IMR-90 (cell line): ENCODE measurements at regions of chr2 and their contacts with region 1.

Region 1: DNA sequence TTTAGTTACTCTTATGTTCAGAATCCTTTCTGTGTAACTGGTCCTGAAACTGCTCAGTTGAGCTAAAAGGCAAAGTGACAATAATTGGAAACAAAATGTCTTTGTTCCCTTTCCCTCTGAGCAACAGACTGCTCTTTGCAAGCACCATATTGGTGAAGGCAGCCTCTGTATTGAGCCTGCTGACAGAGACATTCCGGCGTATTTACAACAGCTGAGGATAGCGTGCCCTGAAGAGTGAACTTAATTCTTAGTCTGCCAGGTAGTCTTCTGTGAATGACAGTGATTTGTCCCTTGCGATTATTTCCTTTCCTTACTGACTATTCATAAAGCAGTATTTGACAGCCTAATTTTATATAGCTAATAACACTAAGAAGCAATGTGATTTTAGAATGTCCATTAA is 239.1 kb downstream of the CPS1 start:
- DNase-seq: no peak
- ATAC-seq: no peak
- H3K4me3 ChIP-seq: no peak overlapping the region
- H3K27ac ChIP-seq: no peak overlapping the region
- H3K4me1 ChIP-seq: no peaks in the 10 kb centered on the region
- H3K27me3 ChIP-seq: no peaks in the 10 kb centered on the region
- CTCF ChIP-seq: no peak
- POLR2A ChIP-seq: no peak
- RAD21 ChIP-seq: no peak

Region 2: GRCh38 chr2:210762604-210763588 is 32.6 kb before region 1 on chr2:
- CTCF ChIA-PET with region 1: no interaction called
- POLR2A ChIA-PET with region 1: no interaction called
- dilution Hi-C with region 1: no loop called
- in situ Hi-C with region 1: no loop called
- intact Hi-C with region 1: no loop called
- DNase-seq: no peak
- ATAC-seq: no peak
- H3K4me3 ChIP-seq: no peak overlapping the region
- H3K27ac ChIP-seq: no peak overlapping the region
- H3K4me1 ChIP-seq: no peaks in the 10 kb centered on the region
- H3K27me3 ChIP-seq: no peaks in the 10 kb centered on the region
- CTCF ChIP-seq: no peak
- POLR2A ChIP-seq: no peak
- RAD21 ChIP-seq: no peak

Region 3: GRCh38 chr2:210971431-210971830 is 175.9 kb after region 1 on chr2:
- CTCF ChIA-PET with region 1: no interaction called
- POLR2A ChIA-PET with region 1: no interaction called
- dilution Hi-C with region 1: no loop called
- in situ Hi-C with region 1: no loop called
- intact Hi-C with region 1: loop called (anchors 5 kb)
- DNase-seq: no peak
- ATAC-seq: no peak
- H3K4me3 ChIP-seq: no peak overlapping the region
- H3K27ac ChIP-seq: no peak overlapping the region
- H3K4me1 ChIP-seq: no peaks in the 10 kb centered on the region
- H3K27me3 ChIP-seq: no peaks in the 10 kb centered on the region
- CTCF ChIP-seq: no peak
- POLR2A ChIP-seq: no peak
- RAD21 ChIP-seq: no peak